Endothelial cell of umbilical vein (primary cell): ENCODE measurements at regions of chr18 and their contacts with region 1.

Region 1: DNA sequence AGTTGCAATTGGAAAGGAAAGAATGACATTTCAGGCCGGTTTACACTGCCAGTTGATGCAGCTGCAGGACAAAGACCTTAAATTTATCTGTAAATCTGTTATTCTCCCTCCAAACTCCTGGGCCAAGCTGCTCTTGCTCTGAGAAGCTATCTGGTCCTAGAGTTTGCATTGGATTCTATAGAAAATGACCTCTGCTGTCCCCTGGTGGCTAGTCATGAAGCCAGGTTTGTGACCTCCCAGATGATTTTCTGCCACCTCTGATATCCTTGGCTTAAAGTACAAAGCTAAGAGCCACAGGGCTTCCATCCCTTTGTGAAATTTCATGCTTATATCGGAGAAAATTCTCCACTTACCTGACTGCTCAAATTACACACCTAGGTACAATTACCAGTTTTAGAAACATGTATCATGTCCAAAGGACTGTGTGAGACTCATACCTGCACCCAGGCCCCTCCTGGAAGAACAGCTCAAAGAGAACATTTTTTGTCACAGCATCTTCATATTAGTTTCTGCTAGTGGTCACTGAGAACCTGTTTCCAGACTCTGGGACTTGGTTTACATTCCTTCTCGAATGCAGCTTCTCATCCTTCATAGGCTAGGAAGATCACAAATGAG is 28.9 kb upstream of the IER3IP1 start:
- DNase-seq: peak; percentile 48
- H3K4me3 ChIP-seq: no peak overlapping the region
- H3K27ac ChIP-seq: no peak overlapping the region
- H3K4me1 ChIP-seq: no peaks in the 10 kb centered on the region
- H3K27me3 ChIP-seq: peaks cover 5 to 12% of the 10 kb centered on the region in 2 experiments
- CTCF ChIP-seq: peak; percentile 73 to 78
- POLR2A ChIP-seq: no peak

Region 2: DNA sequence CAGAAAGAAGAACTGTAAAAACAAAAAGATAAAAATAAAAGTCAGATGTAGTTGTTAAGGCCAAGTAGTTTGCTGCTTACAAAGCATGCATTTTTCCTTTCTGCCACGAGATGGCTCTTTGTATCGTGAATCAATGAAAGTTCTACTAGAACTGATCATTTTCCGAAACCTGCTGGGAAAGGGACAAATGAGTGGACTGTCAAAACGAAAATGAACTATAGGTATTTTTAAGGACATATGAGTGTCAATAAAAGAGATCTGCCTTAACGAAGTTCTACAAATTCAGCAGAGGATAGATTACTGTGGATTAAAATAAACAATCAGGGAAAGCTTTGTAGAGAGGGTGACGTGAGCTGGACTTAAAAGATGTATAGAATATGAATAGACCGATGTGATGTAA is 154.5 kb before region 1 on chr18:
- CTCF ChIA-PET with region 1: interaction called, 55 read pairs
- POLR2A ChIA-PET with region 1: no interaction called
- dilution Hi-C with region 1: no loop called
- intact Hi-C with region 1: loop called (anchors 1 kb)
- DNase-seq: peak; percentile 51
- H3K4me3 ChIP-seq: no peak overlapping the region
- H3K27ac ChIP-seq: no peak overlapping the region
- H3K4me1 ChIP-seq: no peaks in the 10 kb centered on the region
- H3K27me3 ChIP-seq: peaks cover 0 to 3% of the 10 kb centered on the region in 2 experiments
- CTCF ChIP-seq: peak; percentile 32 to 54
- POLR2A ChIP-seq: no peak

Region 3: DNA sequence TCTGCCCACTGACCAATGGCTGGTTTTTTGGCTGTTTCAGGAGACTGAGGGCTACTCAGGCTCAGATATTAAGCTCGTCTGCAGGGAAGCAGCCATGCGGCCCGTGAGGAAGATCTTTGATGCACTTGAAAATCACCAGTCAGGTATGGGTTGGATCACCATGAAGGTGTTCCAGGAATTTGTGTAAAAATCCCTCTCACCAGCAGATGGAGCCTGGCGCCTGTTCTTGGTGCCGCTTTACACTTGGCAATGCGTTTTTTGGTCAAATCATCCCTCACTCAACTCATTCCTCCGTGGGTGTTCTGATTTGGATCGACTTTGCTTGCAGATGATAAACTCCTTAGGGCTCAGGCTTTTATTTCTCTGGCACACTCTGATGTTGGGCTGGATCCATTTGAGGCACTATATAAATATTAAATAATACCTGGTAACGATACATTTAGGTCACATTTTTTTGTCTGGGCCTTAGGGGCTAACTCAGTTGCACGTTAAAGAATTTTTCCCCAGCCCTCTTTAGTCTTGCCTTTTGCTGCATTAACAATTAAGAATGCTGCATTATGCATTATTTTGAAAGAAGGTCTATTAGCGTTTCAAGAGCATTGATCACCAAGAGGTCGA is 104.7 kb before region 1 on chr18:
- CTCF ChIA-PET with region 1: interaction called, 156 read pairs
- POLR2A ChIA-PET with region 1: no interaction called
- dilution Hi-C with region 1: no loop called
- intact Hi-C with region 1: loop called (anchors 1 kb)
- DNase-seq: peak; percentile 56
- H3K4me3 ChIP-seq: no peak overlapping the region
- H3K27ac ChIP-seq: no peak overlapping the region
- H3K4me1 ChIP-seq: no peaks in the 10 kb centered on the region
- H3K27me3 ChIP-seq: no peaks in the 10 kb centered on the region
- CTCF ChIP-seq: peak; percentile 70 to 78
- POLR2A ChIP-seq: no peak

Region 4: DNA sequence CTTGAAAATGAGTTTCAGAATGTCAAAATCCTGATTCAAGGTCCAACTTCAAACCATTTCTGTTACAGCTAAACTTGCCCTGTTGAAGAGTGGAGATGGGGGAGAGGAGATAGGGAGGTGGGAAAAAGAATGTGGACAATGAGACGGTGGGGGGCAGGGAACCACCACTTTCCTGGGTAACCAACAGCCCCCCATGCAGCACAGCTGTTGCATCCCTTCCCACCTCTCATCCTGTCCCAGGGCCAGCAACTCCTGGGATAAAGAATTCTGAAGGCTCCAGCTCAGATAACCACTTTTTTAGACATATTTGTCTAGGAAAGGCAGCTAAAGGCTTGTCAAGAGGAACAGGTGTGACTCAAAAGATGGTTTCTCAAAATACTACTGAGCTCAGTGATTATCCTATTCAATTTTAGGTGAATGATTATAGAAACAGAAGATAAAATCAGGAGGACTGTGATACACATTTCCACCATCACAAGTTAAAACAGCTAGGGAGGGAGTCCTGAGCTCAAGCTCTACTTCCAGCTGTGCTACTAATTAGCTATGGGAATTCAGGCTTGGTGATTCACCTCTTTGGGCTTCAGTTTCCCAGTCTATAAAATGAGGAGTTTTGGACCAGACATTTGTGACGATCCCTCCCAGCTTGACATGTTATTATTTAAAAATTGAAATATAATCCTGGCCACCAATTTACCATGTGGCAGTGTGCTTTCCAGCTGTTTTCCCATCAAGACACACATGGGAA is 91.0 kb before region 1 on chr18:
- CTCF ChIA-PET with region 1: interaction called, 24 read pairs
- POLR2A ChIA-PET with region 1: no interaction called
- dilution Hi-C with region 1: no loop called
- intact Hi-C with region 1: no loop called
- DNase-seq: no peak
- H3K4me3 ChIP-seq: no peak overlapping the region
- H3K27ac ChIP-seq: no peak overlapping the region
- H3K4me1 ChIP-seq: no peaks in the 10 kb centered on the region
- H3K27me3 ChIP-seq: no peaks in the 10 kb centered on the region
- CTCF ChIP-seq: no peak
- POLR2A ChIP-seq: no peak

Region 5: DNA sequence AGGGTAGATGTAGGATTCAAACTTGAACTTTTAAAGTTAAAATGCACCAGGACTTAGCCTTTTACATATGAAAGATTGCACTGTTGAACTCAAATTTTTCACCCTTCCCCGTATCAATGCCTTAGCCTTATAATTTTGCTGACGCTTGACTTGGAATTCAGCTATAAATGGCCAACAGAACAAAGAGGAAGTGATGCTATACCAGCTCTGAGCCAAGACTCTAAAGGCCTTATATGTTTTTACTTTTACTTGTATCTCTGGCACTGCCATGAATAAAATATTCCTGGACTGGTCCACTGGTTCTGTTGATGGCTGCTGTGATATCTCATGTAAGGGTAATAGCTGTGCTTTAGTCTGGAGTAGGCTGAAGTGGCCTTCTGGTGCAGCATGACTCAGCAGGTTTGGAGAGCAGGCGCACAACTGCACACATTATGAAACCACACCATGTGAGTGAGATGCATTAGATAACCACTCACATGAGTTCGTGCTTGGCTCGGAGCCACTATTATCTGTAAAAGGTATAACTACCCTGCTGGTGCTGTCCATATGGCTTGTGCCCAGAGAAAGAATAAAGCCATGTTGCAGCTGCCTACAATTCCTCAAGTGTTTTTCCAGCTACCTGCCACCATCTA is 20.5 kb before region 1 on chr18:
- CTCF ChIA-PET with region 1: interaction called, 10 read pairs
- POLR2A ChIA-PET with region 1: no interaction called
- dilution Hi-C with region 1: no loop called
- intact Hi-C with region 1: no loop called
- DNase-seq: peak; percentile 10
- H3K4me3 ChIP-seq: no peak overlapping the region
- H3K27ac ChIP-seq: no peak overlapping the region
- H3K4me1 ChIP-seq: no peaks in the 10 kb centered on the region
- H3K27me3 ChIP-seq: peaks cover 6 to 12% of the 10 kb centered on the region in 2 experiments
- CTCF ChIP-seq: no peak
- POLR2A ChIP-seq: no peak

Region 6: DNA sequence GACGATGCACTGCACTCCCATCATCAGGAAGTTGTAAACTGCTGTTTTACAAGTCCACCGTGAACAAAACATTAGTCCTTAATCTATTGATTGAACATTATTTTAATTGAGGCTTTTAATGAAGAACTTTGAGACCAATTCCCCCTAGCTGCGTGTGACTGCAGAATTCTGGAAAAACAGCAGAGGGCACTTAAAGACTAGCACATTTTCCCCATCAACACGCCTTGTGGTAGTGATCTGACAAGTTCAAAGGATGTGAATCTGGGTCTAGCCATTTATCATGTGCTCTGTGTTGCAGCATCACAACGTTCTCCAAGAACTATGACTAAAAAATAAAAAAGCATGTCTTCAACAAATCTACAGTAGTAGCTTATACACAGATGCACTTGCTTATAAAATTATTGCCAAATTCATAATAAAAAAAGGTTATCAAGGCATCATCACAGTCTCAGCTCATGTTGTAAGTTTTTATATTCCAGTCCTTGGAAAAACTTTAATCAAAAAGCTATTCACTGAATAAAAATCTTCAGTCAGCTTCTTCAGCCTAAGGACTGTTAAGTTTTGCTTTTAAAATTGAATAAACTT is 10.6 kb after region 1 on chr18:
- CTCF ChIA-PET with region 1: interaction called, 37 read pairs
- POLR2A ChIA-PET with region 1: no interaction called
- dilution Hi-C with region 1: no loop called
- intact Hi-C with region 1: no loop called
- DNase-seq: peak; percentile 47
- H3K4me3 ChIP-seq: no peak overlapping the region
- H3K27ac ChIP-seq: no peak overlapping the region
- H3K4me1 ChIP-seq: no peaks in the 10 kb centered on the region
- H3K27me3 ChIP-seq: peaks cover 11 to 13% of the 10 kb centered on the region in 2 experiments
- CTCF ChIP-seq: peak; percentile 23 to 32
- POLR2A ChIP-seq: no peak

Region 7: DNA sequence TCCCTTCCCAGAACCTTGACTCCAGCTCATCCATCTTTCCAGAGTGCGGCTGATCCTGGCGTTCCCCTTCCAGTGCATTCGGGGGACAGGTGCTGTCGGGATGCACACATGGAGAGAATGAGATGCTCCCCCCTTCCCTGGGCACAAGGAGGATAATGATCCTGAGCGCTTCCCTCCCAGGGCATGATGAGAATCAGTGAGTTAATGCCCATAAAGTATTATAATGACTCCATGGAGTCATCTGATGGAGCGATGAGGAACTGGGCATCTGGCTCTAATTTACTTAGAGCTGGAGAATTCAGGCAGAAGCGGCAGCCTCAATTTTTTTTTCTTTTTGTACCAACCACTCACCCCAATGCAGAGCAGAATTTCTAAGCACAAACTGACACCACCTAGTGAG is 126.0 kb after region 1 on chr18:
- CTCF ChIA-PET with region 1: no interaction called
- POLR2A ChIA-PET with region 1: no interaction called
- dilution Hi-C with region 1: no loop called
- intact Hi-C with region 1: no loop called
- DNase-seq: no peak
- H3K4me3 ChIP-seq: no peak overlapping the region
- H3K27ac ChIP-seq: no peak overlapping the region
- H3K4me1 ChIP-seq: no peaks in the 10 kb centered on the region
- H3K27me3 ChIP-seq: no peaks in the 10 kb centered on the region
- CTCF ChIP-seq: no peak
- POLR2A ChIP-seq: no peak

Region 8: DNA sequence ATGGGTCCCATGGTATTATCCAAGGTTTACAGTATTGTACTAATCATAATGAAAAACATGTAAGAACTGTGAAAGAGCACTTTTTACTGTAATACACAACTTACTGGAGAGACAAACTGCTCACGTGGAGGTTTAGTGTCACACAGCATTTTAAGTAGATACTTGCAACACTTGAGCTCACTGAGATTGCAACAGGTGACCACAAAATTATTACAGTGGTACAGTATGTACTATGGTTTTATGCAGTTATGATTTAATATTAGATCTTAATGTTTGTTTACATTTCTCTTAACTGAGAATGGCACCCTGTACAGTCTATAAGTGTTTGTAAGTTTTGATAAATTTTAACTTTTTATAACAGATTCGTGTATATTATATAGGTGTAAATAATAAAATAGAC is 165.0 kb after region 1 on chr18:
- CTCF ChIA-PET with region 1: no interaction called
- POLR2A ChIA-PET with region 1: no interaction called
- dilution Hi-C with region 1: no loop called
- intact Hi-C with region 1: no loop called
- DNase-seq: no peak
- H3K4me3 ChIP-seq: no peak overlapping the region
- H3K27ac ChIP-seq: no peak overlapping the region
- H3K4me1 ChIP-seq: no peaks in the 10 kb centered on the region
- H3K27me3 ChIP-seq: no peaks in the 10 kb centered on the region
- CTCF ChIP-seq: no peak
- POLR2A ChIP-seq: no peak

Region 9: DNA sequence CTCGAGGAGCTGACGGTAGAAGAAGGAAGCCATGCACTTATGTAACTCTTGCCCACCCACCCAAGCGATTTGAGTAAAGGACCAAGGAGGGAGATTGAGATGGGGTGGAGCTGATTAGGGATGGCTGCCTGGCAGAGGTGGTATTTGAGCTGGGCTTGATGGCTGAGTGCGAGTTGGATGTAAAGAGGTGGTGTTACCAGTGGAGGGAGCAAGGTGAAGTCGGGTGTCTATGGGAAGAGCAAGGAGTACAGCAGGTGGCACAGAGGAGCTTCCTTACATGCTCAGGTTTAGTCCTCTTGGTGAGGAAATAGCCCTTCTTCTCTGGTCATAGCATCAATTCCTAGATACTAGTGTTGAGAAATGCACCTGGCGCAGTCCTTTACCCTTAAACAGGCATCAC is 340.6 kb after region 1 on chr18:
- CTCF ChIA-PET with region 1: no interaction called
- POLR2A ChIA-PET with region 1: no interaction called
- dilution Hi-C with region 1: no loop called
- intact Hi-C with region 1: no loop called
- DNase-seq: no peak
- H3K4me3 ChIP-seq: no peak overlapping the region
- H3K27ac ChIP-seq: no peak overlapping the region
- H3K4me1 ChIP-seq: no peaks in the 10 kb centered on the region
- H3K27me3 ChIP-seq: no peaks in the 10 kb centered on the region
- CTCF ChIP-seq: no peak
- POLR2A ChIP-seq: no peak